ENCODE measurements at regions of chr1 and their contacts with region 1.

Region 1: GRCh38 chr1:220113136-220113695 is 19.3 kb downstream of the IARS2 start:
- DNase-seq: peak; percentile 20
- ATAC-seq: no peak
- H3K4me3 ChIP-seq: no peak overlapping the region
- H3K27ac ChIP-seq: no peak overlapping the region
- H3K4me1 ChIP-seq: no peaks in the 10 kb centered on the region
- H3K27me3 ChIP-seq: no peaks in the 10 kb centered on the region
- CTCF ChIP-seq: peak; percentile 40
- POLR2A ChIP-seq: no peak
- RAD21 ChIP-seq: no peak

Region 2: GRCh38 chr1:220056374-220056773 is 56.8 kb before region 1 on chr1:
- CTCF ChIA-PET with region 1: no interaction called
- POLR2A ChIA-PET with region 1: interaction called, 19 read pairs
- dilution Hi-C with region 1: no loop called
- in situ Hi-C with region 1: no loop called
- intact Hi-C with region 1: no loop called
- DNase-seq: no peak
- ATAC-seq: no peak
- H3K4me3 ChIP-seq: no peak overlapping the region
- H3K27ac ChIP-seq: no peak overlapping the region
- H3K4me1 ChIP-seq: no peaks in the 10 kb centered on the region
- H3K27me3 ChIP-seq: no peaks in the 10 kb centered on the region
- CTCF ChIP-seq: no peak
- POLR2A ChIP-seq: no peak
- RAD21 ChIP-seq: no peak

Region 3: DNA sequence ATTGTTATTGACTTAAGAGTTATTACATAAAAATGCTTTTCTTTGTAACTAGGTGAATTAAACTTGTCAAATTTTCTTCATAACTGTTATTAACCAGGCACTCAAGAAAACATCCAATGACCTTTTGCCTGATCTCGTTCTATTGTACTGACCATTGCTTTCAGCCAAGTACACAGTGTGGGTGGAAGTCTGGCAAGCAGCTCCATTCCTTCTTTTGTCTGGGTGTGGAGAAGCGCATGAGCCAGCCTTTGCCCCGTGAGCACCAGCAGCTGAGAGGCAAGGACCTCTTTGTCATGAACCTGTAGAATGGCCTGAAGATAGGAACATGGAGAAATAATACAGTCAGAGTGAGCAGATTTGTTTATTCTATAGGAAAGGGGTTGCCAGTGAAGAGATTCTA is 38.2 kb after region 1 on chr1:
- CTCF ChIA-PET with region 1: no interaction called
- POLR2A ChIA-PET with region 1: no interaction called
- dilution Hi-C with region 1: no loop called
- in situ Hi-C with region 1: no loop called
- intact Hi-C with region 1: loop called (anchors 5 kb)
- DNase-seq: peak; percentile 15
- ATAC-seq: peak; percentile 49
- H3K4me3 ChIP-seq: no peak overlapping the region
- H3K27ac ChIP-seq: no peak overlapping the region
- H3K4me1 ChIP-seq: peaks cover 2% of the 10 kb centered on the region; the same call in 1 of the 2 replicates
- H3K27me3 ChIP-seq: no peaks in the 10 kb centered on the region
- CTCF ChIP-seq: no peak
- POLR2A ChIP-seq: no peak
- RAD21 ChIP-seq: no peak

Region 4: DNA sequence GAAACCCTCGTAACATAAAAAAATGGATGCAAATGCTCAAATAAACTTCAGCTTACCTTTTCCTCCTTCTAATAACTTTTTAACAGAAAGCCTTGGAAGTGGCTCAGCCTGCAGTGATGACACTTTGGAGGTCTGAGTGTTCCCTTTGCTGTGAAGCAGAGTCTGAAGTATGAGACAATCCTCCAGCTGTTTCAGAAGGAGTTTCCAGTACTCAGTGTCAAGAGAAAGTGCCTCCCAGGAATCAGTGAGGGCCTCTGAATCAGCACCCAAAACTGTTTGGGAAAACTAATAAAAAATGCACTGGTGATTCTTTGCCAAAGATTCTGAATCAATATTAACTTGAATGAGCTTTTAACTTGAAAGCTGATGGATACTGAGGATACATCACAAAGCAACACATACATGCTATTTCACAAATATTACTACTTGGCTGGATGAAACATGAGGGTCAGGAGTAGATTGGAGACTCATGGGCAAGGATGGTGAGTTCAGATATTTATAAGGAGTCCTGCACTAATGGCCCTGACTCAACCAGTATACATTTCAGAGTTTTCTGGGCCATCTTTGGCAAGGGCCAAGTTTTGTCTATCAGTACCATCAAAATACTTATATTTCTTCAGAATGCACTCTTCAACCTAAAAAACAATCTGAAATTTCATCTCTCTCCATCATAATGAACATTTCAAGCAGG is 57.8 kb after region 1 on chr1:
- CTCF ChIA-PET with region 1: no interaction called
- POLR2A ChIA-PET with region 1: interaction called, 12 read pairs
- dilution Hi-C with region 1: no loop called
- in situ Hi-C with region 1: no loop called
- intact Hi-C with region 1: no loop called
- DNase-seq: peak; percentile 39
- ATAC-seq: peak; percentile 59
- H3K4me3 ChIP-seq: no peak overlapping the region
- H3K27ac ChIP-seq: no peak overlapping the region
- H3K4me1 ChIP-seq: no peaks in the 10 kb centered on the region
- H3K27me3 ChIP-seq: no peaks in the 10 kb centered on the region
- CTCF ChIP-seq: no peak
- POLR2A ChIP-seq: no peak
- RAD21 ChIP-seq: no peak

Measured in IMR-90 (cell line).